K562 (cell line): ENCODE measurements at regions of chr11 and their contacts with region 1.

Region 1: GRCh38 chr11:5004424-5005274 is 10.0 kb downstream of the OR51L1 start:
- DNase-seq: peak; percentile 29 to 71 (median 36)
- ATAC-seq: peak; percentile 78
- H3K4me3 ChIP-seq: no peak overlapping the region
- H3K27ac ChIP-seq: no peak overlapping the region
- H3K4me1 ChIP-seq: no peaks in the 10 kb centered on the region
- H3K27me3 ChIP-seq: no peaks in the 10 kb centered on the region
- CTCF ChIP-seq: peak; percentile 65 to 76 (median 68); a peak in 4 of 6 replicates
- EP300 ChIP-seq: no peak
- POLR2A ChIP-seq: no peak
- RAD21 ChIP-seq: peak; percentile 75 to 86

Region 2: GRCh38 chr11:4626207-4627099 is 378.2 kb before region 1 on chr11:
- CTCF ChIA-PET with region 1: interaction called, 5 read pairs
- POLR2A ChIA-PET with region 1: no interaction called
- in situ Hi-C with region 1: no loop called
- intact Hi-C with region 1: loop called (anchors 1 kb)
- DNase-seq: peak; percentile 43 to 89 (median 61)
- ATAC-seq: peak; percentile 96
- H3K4me3 ChIP-seq: no peak overlapping the region
- H3K27ac ChIP-seq: no peak overlapping the region
- H3K4me1 ChIP-seq: no peaks in the 10 kb centered on the region
- H3K27me3 ChIP-seq: no peaks in the 10 kb centered on the region
- CTCF ChIP-seq: peak; percentile 63 to 82 (median 81)
- EP300 ChIP-seq: no peak
- POLR2A ChIP-seq: no peak
- RAD21 ChIP-seq: peak; percentile 71 to 90

Region 3: DNA sequence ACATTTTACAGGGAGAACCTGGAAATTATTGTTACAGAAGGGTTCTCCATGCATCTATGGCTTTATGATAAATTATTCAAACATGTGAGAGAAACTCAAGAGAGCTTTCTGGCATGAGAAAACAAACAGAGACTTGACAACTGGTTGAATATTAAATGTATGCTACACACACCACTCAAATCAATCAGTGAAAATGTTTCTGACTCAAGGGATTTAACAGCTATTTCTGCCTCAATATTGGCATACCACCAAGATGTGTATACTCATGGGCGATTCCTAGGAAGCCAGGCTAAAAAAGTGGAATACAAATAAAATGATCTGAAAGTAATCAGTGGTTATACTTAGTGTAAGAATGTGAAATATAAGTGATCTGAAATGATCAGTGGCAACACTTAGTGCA is 138.8 kb before region 1 on chr11:
- CTCF ChIA-PET with region 1: no interaction called
- POLR2A ChIA-PET with region 1: no interaction called
- in situ Hi-C with region 1: no loop called
- intact Hi-C with region 1: loop called (anchors 10 kb)
- DNase-seq: no peak
- ATAC-seq: no peak
- H3K4me3 ChIP-seq: no peak overlapping the region
- H3K27ac ChIP-seq: no peak overlapping the region
- H3K4me1 ChIP-seq: no peaks in the 10 kb centered on the region
- H3K27me3 ChIP-seq: no peaks in the 10 kb centered on the region
- CTCF ChIP-seq: no peak
- EP300 ChIP-seq: no peak
- POLR2A ChIP-seq: no peak
- RAD21 ChIP-seq: no peak